AG04450 (cell line): ENCODE measurements at regions of chr16 and their contacts with region 1.

Region 1: GRCh38 chr16:84186685-84187437 is at the start of gene TAF1C:
- DNase-seq: peak; percentile 88
- H3K4me3 ChIP-seq: peak within 1 kb of the TSS; percentile 93
- H3K27ac ChIP-seq: peak within 1 kb of the TSS; percentile 39
- H3K27me3 ChIP-seq: no peaks in the 10 kb centered on the region
- CTCF ChIP-seq: peak; percentile 95
- polyA plus RNA-seq, gene TAF1C: 14.2 and 15.2 TPM in 2 replicates

Region 2: GRCh38 chr16:84098936-84099335 is 87.9 kb before region 1 on chr16:
- CTCF ChIA-PET with region 1: interaction called, 10 read pairs
- POLR2A ChIA-PET with region 1: no interaction called
- DNase-seq: no peak
- H3K4me3 ChIP-seq: no peak overlapping the region
- H3K27ac ChIP-seq: no peak overlapping the region
- H3K27me3 ChIP-seq: no peaks in the 10 kb centered on the region
- CTCF ChIP-seq: no peak

Region 3: DNA sequence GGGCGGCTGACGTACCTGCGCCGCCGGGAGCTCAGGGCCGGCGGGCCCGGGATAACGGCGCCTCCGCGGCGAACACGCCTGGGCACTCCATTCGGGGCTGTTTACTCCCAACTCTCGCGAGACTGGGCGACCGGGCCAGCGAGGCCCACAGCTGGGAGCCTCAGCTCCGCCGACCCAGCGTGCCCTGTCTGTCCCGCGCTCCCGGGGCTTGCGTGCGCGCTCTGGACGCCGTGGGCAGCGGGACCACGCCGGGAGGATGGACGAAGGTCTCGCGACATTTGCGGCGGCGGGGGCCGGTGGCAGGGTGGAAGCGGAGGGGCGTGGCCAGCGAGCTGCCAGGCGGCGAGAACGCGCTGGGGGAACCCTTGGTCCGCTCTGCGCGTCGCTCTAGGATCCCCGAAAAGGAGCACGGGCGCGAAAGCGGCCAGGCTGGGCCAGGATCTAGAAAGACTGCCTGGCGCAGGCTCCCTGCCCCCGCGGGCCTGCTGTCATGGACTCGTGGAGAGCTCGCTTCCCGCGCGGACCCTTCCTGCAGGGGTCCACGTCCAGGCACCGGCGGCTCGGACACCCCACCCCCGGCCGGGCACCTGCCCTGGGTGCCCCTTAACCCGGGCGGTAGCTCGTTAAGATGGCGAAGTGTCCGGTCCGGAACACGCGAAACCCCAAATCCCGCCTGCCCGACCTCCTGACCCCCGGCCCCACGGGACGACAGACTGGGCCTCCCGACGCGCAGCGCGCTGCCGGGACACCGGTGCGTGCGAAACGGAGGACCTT is 70.0 kb before region 1 on chr16 and contains the start of gene MBTPS1:
- CTCF ChIA-PET with region 1: interaction called, 19 read pairs
- POLR2A ChIA-PET with region 1: interaction called, 6 read pairs
- DNase-seq: peak; percentile 96
- H3K4me3 ChIP-seq: peak within 1 kb of the TSS; percentile 95
- H3K27ac ChIP-seq: peak within 1 kb of the TSS; percentile 73
- H3K27me3 ChIP-seq: no peaks in the 10 kb centered on the region
- CTCF ChIP-seq: no peak
- polyA plus RNA-seq, gene MBTPS1: 92.1 and 116 TPM in 2 replicates

Region 4: GRCh38 chr16:84175350-84176081 is 11.3 kb before region 1 on chr16:
- CTCF ChIA-PET with region 1: interaction called, 100 read pairs
- POLR2A ChIA-PET with region 1: interaction called, 12 read pairs
- DNase-seq: peak; percentile 21
- H3K4me3 ChIP-seq: no peak overlapping the region
- H3K27ac ChIP-seq: no peak overlapping the region
- H3K27me3 ChIP-seq: peaks cover 7% of the 10 kb centered on the region
- CTCF ChIP-seq: peak; percentile 80

Region 5: GRCh38 chr16:84302111-84302954 is 115.5 kb after region 1 on chr16:
- CTCF ChIA-PET with region 1: interaction called, 41 read pairs
- POLR2A ChIA-PET with region 1: no interaction called
- DNase-seq: no peak
- H3K4me3 ChIP-seq: no peak overlapping the region
- H3K27ac ChIP-seq: peak overlapping the region; percentile 87
- H3K27me3 ChIP-seq: peaks cover 8% of the 10 kb centered on the region
- CTCF ChIP-seq: no peak

Region 6: GRCh38 chr16:84947022-84947421 is 760.2 kb after region 1 on chr16:
- CTCF ChIA-PET with region 1: no interaction called
- POLR2A ChIA-PET with region 1: no interaction called
- DNase-seq: no peak
- H3K4me3 ChIP-seq: no peak overlapping the region
- H3K27ac ChIP-seq: no peak overlapping the region
- H3K27me3 ChIP-seq: peaks cover 2% of the 10 kb centered on the region
- CTCF ChIP-seq: no peak